Vagina (tissue), 2 donors: ENCODE measurements at regions of chr21 and their contacts with region 1.

Region 1: GRCh38 chr21:45439161-45439872 is 34.4 kb downstream of the COL18A1 start:
- DNase-seq: no peak
- H3K4me3 ChIP-seq: peak overlapping the region; percentile 30 to 38
- H3K27ac ChIP-seq: peak overlapping the region; percentile 85
- H3K4me1 ChIP-seq: peaks cover 50% of the 10 kb centered on the region
- H3K27me3 ChIP-seq: no peaks in the 10 kb centered on the region
- CTCF ChIP-seq: peak; percentile 97 to 99 (median 99)
- POLR2A ChIP-seq: no peak

Region 2: DNA sequence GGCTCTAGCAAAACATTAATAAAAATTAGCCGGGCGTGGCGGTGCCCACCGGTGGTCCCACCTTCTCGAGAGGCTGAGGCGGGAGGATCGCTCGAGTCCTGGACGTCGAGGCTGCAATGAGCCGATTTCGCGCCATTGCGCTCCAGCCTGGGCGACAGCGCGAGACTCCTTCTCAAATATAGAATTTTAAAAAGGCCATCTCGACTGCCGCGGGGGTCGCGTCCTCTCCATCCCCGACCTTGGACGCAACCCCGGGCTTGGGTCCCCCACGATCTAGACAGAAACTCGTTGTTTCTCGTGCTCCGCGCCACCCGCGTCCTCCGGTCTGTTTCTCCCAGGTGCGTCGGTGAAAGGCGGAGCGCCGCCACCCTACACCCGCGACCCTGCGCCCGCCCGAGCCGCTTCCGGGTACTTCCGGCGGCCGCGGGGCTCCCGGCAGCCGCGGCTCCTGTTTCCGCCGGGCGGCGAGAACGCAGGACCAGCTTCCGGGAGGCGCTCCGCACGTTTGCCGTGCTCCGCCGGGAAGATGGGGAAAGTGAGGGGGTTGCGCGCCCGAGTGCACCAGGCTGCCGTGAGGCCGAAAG is 499.7 kb before region 1 on chr21 and contains the start of gene SLX9:
- intact Hi-C with region 1: no loop called
- DNase-seq: no peak
- H3K4me3 ChIP-seq: peak within 1 kb of the TSS; percentile 97 to 98
- H3K27ac ChIP-seq: peak within 1 kb of the TSS; percentile 76
- H3K4me1 ChIP-seq: peaks cover 34% of the 10 kb centered on the region
- H3K27me3 ChIP-seq: no peaks in the 10 kb centered on the region
- CTCF ChIP-seq: no peak
- POLR2A ChIP-seq: no peak
- total RNA-seq, gene SLX9: 8.3 TPM

Region 3: GRCh38 chr21:44949779-44950198 is 489.5 kb before region 1 on chr21:
- intact Hi-C with region 1: loop called (anchors 10 kb)
- DNase-seq: no peak
- H3K4me3 ChIP-seq: no peak overlapping the region
- H3K27ac ChIP-seq: no peak overlapping the region
- H3K4me1 ChIP-seq: peaks cover 17% of the 10 kb centered on the region
- H3K27me3 ChIP-seq: no peaks in the 10 kb centered on the region
- CTCF ChIP-seq: peak; percentile 89 to 95 (median 95)
- POLR2A ChIP-seq: no peak

Region 4: GRCh38 chr21:45152265-45152746 is 287.0 kb before region 1 on chr21:
- intact Hi-C with region 1: loop called (anchors 10 kb)
- DNase-seq: peak in 1 of 2 donors; percentile 70
- H3K4me3 ChIP-seq: no peak overlapping the region
- H3K27ac ChIP-seq: no peak overlapping the region
- H3K4me1 ChIP-seq: no peaks in the 10 kb centered on the region
- H3K27me3 ChIP-seq: no peaks in the 10 kb centered on the region
- CTCF ChIP-seq: no peak
- POLR2A ChIP-seq: no peak

Region 5: DNA sequence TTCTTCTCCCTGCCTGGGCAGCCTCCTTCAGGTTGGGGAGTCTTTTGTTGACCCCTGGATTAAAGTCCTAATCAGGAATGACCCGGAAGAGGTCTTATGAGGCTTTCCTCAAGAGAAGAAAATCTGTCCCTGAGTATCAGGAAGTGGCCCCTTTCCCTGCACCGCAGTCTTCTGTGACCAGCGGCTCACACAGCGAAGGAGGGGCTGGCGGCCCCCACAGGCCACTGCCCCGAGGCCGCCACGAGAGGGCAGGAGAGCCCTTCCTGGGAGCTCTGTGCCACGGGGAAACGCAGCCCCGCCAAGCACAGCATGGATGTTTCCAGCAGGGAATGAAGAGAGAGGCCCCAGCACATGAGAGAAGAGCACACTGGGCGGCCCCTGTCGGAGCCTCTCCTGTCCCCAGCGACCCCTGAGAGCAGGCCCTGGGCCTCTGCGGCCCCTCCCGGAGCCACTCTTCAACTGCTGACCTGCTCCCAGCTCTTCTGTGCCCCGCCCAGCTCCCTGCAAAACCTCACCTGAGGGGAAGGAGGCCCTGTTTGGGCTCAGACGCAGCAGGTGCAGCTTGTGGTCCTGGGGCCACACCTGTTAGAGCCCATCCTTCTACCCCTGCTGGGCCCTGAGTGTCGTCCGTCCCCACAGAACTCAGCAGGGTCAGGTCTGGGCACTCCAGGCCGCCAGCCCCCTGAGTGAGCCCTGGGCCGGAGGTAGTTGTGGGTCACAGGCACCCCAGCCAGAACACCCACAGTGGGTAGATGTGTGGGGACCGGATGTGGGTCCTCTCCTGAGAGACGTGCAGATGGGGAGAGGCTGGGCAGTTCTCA is 146.7 kb before region 1 on chr21:
- intact Hi-C with region 1: loop called (anchors 2 kb)
- DNase-seq: peak; percentile 92 to 93
- H3K4me3 ChIP-seq: no peak overlapping the region
- H3K27ac ChIP-seq: peak overlapping the region; percentile 94
- H3K4me1 ChIP-seq: peaks cover 50% of the 10 kb centered on the region
- H3K27me3 ChIP-seq: no peaks in the 10 kb centered on the region
- CTCF ChIP-seq: peak; percentile 92 to 98 (median 93)
- POLR2A ChIP-seq: no peak

Region 6: DNA sequence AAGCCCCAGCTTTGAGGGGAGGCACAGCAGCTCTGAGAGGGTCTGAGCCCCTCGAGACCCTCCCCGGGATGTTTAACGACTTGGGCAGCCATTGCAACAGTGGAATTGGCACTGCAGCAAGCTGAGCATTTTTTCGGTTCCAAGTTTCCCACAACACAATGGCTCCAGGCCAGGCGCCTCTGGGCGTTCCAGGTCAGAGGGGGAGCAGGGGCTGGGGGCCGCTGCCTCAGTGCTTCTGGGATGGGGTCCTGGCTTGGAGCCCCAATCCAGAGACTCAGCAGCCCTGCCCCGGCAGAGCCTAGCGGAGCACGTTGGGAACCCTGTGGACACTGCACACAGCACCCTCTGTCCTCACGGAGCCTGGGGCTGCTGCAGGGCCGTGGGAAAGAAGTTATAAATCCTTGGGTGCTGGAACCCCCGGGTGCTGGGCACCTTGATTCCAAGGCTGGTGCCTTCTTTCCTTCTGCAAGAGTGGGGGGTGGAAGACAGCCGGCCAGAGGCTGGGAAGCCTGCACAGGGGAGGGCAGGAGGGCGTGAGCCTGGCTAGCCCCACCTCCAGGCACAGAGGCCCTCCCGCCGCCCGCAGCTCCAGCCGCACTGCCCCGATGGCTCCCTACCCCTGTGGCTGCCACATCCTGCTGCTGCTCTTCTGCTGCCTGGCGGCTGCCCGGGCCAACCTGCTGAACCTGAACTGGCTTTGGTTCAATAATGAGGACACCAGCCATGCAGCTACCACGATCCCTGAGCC is 15.8 kb after region 1 on chr21:
- intact Hi-C with region 1: no loop called
- DNase-seq: no peak
- H3K4me3 ChIP-seq: peak overlapping the region; percentile 33 to 44
- H3K27ac ChIP-seq: peak overlapping the region; percentile 43
- H3K4me1 ChIP-seq: peaks cover 54% of the 10 kb centered on the region
- H3K27me3 ChIP-seq: no peaks in the 10 kb centered on the region
- CTCF ChIP-seq: no peak
- POLR2A ChIP-seq: no peak

Region 7: DNA sequence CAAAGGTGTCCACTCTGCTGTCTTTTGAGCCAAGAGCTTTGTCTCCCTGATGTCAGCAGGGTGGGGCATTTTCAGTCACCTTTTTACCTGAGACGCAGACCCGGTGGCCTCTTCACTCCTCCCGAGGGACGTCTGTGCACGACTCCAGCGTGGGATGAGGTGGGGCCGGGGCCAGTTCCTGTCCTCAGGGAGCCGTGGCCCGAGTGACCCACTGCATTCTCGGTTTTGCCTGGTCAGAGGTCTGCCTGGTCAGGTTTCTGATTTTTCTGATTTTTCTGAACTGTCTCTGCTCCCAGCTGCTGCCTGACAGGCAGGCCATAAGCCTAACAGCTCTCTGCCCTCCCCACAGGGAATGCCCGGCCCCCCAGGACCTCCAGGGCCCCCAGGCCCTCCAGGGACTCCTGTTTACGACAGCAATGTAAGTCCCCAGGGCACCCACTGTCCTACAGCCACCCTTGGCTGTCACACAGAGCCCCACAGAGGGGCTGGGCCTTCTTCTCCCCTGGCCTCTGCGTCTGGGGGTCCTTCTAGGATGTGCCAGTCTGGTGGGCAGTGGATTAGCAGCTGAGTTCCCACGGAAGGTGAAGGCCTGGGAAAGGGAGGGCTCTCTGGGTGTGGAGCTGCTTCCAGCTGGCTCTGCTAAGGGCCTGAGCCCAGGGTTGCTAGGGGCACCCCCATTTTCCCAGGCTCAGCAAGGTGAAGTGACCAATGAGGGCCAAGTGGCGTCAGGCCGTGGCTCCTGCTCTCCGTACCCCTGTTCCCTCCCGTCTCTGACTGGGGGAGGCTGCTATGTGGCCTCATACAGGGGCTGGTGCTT is 57.0 kb after region 1 on chr21:
- intact Hi-C with region 1: no loop called
- DNase-seq: no peak
- H3K4me3 ChIP-seq: no peak overlapping the region
- H3K27ac ChIP-seq: no peak overlapping the region
- H3K4me1 ChIP-seq: no peaks in the 10 kb centered on the region
- H3K27me3 ChIP-seq: no peaks in the 10 kb centered on the region
- CTCF ChIP-seq: no peak
- POLR2A ChIP-seq: no peak